WTC11 (cell line): ENCODE measurements at regions of chr1 and their contacts with region 1.

Region 1: GRCh38 chr1:158124999-158125398 is 55.7 kb upstream of the CD1D start:
- DNase-seq: peak; percentile 91
- ATAC-seq: peak; percentile 89
- H3K4me3 Mint-ChIP-seq: no peak overlapping the region
- H3K27ac Mint-ChIP-seq: no peak overlapping the region
- H3K4me1 Mint-ChIP-seq: peaks cover 39% of the 10 kb centered on the region
- H3K27me3 Mint-ChIP-seq: no peaks in the 10 kb centered on the region; the same call in none of the 2 replicates
- CTCF ChIP-seq: peak; percentile 78

Region 2: DNA sequence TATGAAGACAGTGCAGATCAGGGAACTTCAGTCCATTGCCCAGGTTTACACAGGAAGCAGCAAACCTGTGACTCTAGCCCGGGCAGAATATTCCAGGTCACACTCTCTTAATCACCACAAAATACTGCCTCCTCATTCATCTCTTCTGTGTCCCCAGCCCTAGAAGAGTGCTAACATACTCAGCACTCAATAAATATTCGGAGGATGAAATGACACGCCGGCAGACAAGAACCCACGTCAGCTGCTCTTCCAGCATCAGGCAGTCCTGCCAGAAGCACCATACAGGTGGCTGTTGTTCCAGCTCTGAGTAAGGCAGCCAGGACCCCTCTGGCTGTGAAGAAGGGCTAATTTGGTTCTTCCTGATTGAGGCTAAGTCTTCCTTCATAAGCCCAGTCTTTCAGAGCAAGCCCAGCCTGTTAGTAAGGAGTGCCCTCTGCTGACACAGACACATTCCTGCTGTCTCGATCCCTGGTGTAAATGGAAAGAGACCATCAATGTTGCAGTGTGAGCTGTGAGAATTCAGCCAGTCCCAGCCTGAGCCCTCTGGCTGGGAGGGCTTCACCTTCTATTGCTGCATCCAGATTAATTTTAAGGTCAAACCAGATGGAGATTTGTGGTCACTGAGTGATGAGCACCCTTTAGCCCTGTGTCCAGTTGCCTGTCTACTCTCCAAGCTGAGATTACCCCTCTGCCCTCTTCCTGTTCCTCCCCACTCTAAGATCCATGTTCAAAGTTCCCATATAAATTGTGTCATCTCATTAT is 176.5 kb before region 1 on chr1:
- CTCF ChIA-PET with region 1: interaction called, 33 read pairs
- POLR2A ChIA-PET with region 1: no interaction called
- DNase-seq: peak; percentile 59
- ATAC-seq: peak; percentile 99
- H3K4me3 Mint-ChIP-seq: no peak overlapping the region
- H3K27ac Mint-ChIP-seq: no peak overlapping the region
- H3K4me1 Mint-ChIP-seq: peaks cover 2% of the 10 kb centered on the region; the same call in 1 of the 2 replicates
- H3K27me3 Mint-ChIP-seq: peaks cover 2% of the 10 kb centered on the region
- CTCF ChIP-seq: 0 out of 2 replicates have a peak, but pooled peaks have one; percentile 16

Region 3: GRCh38 chr1:157978586-157979403 is 146.2 kb before region 1 on chr1:
- CTCF ChIA-PET with region 1: interaction called, 70 read pairs
- POLR2A ChIA-PET with region 1: interaction called, 4 read pairs
- DNase-seq: peak; percentile 78
- ATAC-seq: peak; percentile 89
- H3K4me3 Mint-ChIP-seq: peak overlapping the region; percentile 49
- H3K27ac Mint-ChIP-seq: peak overlapping the region; percentile 31; the same call in 1 of the 2 replicates
- H3K4me1 Mint-ChIP-seq: peaks cover 60% of the 10 kb centered on the region
- H3K27me3 Mint-ChIP-seq: no peaks in the 10 kb centered on the region; the same call in 1 of the 2 replicates
- CTCF ChIP-seq: no peak

Region 4: DNA sequence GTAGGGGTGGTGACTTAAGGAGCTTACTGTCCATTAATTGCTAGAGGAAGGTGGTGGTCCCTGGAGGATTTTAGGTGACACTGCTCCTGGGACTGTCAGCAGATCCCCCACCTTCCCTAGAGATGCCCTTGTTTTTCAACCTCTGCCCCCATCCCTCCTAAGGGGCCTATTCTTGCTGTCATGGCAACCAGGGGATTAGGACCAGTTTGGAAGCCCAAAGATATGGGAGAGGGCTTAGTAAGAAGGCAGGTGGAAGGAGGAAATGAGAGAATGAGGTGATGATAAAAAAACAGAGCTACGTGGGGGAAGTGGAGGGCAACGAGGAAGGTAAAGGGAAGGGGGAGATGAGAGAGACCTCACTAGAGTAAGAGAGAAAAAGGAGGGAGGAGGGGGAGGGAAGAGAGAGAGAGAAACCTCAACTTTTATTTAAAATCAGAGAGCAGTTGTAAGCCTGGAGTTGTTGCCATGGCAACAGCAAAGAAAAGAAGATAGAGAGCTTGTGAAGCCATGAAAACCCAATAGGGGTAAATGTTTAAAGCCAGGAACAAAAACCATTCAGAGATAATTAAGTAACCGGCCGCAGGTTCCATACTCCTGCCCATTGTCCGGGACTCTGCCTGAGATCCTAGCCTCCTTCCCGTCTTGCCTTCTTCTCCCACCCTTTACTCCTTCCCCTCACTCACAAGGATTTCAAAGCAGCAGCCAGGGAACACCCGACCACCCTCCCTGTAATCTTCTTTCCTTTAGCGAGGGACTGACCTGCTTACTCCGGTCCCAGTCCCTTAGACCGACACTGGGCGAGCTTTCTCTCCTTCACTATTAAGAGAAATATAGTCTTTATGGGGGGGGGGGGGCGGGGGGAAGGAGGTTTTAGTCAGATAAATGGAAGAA is 110.9 kb before region 1 on chr1:
- CTCF ChIA-PET with region 1: interaction called, 15 read pairs
- POLR2A ChIA-PET with region 1: no interaction called
- DNase-seq: no peak
- ATAC-seq: peak; percentile 4
- H3K4me3 Mint-ChIP-seq: peak overlapping the region; percentile 44
- H3K27ac Mint-ChIP-seq: peak overlapping the region; percentile 96
- H3K4me1 Mint-ChIP-seq: peaks cover 95% of the 10 kb centered on the region
- H3K27me3 Mint-ChIP-seq: no peaks in the 10 kb centered on the region
- CTCF ChIP-seq: no peak

Region 5: DNA sequence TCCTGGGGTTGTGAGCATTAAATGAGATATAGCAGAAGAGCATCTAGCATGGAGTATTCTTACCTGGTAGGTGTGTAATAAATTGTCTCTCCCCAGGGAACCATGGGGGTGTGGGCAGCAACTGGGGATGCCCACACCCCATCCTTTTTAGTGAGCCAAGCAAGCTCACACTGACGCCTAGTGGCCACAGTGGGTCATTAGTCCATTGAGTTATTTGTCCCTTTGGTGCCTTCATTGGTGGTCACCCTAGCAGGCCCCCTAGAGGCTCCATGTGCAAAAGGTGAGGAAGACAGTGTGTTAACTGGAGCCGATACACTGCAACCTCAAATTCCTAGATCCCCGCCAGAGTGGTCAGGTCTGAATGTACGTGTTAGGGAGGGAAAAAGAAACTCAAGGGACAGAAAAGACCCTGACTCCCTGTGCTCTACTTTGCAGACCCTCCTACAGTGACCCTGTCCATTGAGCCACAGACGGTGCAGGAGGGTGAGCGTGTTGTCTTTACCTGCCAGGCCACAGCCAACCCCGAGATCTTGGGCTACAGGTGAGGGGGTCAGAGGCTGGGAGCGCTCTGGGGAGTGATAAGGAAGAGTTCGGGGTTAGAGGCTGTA is 37.6 kb before region 1 on chr1:
- CTCF ChIA-PET with region 1: interaction called, 443 read pairs
- POLR2A ChIA-PET with region 1: no interaction called
- DNase-seq: peak; percentile 87
- ATAC-seq: peak; percentile 97
- H3K4me3 Mint-ChIP-seq: no peak overlapping the region
- H3K27ac Mint-ChIP-seq: peak overlapping the region; percentile 69
- H3K4me1 Mint-ChIP-seq: peaks cover 8% of the 10 kb centered on the region
- H3K27me3 Mint-ChIP-seq: no peaks in the 10 kb centered on the region
- CTCF ChIP-seq: peak; percentile 94

Region 6: DNA sequence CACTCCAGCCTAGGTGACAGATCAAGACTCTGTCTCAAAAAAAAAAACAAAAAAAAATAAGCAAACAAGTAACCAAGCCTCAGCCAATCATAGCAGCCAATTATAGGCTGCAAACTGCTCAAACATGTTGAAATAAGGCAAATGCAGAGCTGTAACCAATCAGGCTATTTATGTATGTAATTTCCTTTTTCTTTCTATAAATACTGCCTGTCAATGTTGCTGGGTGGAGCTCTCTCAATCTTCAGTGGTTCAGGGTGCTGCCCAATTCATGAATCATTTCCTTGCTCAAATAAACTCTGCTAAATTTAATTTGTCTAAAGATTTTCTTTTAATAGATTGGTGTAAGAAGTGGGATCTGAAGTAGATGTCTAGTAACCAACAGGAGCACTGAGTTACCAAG is 44.1 kb after region 1 on chr1:
- CTCF ChIA-PET with region 1: no interaction called
- POLR2A ChIA-PET with region 1: no interaction called
- DNase-seq: no peak
- ATAC-seq: no peak
- H3K4me3 Mint-ChIP-seq: no peak overlapping the region
- H3K27ac Mint-ChIP-seq: no peak overlapping the region
- H3K4me1 Mint-ChIP-seq: no peaks in the 10 kb centered on the region
- H3K27me3 Mint-ChIP-seq: peaks cover 13% of the 10 kb centered on the region; the same call in 1 of the 2 replicates
- CTCF ChIP-seq: no peak

Region 7: GRCh38 chr1:158180741-158181576 is 56.0 kb after region 1 on chr1 and contains the start of gene CD1D:
- CTCF ChIA-PET with region 1: interaction called, 14 read pairs
- POLR2A ChIA-PET with region 1: interaction called, 3 read pairs
- DNase-seq: peak; percentile 64
- ATAC-seq: peak; percentile 55
- H3K4me3 Mint-ChIP-seq: peak within 1 kb of the TSS; percentile 92
- H3K27ac Mint-ChIP-seq: no peak within 1 kb of the TSS
- H3K4me1 Mint-ChIP-seq: peaks cover 45% of the 10 kb centered on the region
- H3K27me3 Mint-ChIP-seq: peaks cover 90% of the 10 kb centered on the region
- CTCF ChIP-seq: no peak
- total RNA-seq, gene CD1D: 3.8 to 4.7 TPM (median 3.9 TPM) in 3 replicates

Region 8: DNA sequence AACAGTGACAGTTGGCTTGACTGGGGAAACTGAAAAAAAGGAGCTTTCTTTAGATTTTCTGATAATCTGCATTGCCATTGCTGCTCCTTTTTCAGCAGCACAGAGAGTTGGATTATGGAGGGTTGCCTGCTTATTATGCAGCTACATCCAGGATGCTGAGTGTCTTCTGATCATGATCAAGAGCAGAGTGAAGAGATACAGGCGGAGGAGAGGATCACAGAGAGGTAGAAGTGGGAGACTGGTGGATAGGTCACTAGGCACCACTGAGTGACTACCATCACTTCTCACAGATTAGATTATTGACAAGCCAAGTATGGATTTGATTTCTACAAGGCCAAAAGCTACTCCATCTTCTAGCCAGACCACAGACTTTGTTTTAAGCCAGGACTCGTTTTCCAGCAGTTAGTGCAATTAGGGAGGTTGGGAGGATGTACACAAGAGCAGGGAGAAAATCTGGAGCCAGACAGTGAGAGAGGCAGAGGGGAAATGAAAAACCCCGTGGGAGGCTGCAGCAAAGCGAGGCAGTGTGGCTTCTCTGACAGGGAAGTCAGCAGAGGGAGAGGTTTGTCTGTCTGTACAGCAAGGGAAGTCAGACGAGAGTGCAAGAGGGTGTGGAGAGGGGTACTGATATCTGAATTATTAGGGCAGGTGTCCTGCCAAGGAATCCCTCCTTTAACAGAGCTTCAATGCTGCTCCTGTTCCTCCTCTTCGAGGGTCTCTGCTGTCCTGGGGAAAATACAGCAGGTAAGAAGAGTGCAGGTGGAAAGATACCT is 228.5 kb after region 1 on chr1 and contains the start of gene CD1E:
- CTCF ChIA-PET with region 1: no interaction called
- POLR2A ChIA-PET with region 1: no interaction called
- DNase-seq: no peak
- ATAC-seq: no peak
- H3K4me3 Mint-ChIP-seq: no peak within 1 kb of the TSS
- H3K27ac Mint-ChIP-seq: no peak within 1 kb of the TSS
- H3K4me1 Mint-ChIP-seq: peaks cover 13% of the 10 kb centered on the region
- H3K27me3 Mint-ChIP-seq: no peaks in the 10 kb centered on the region
- CTCF ChIP-seq: no peak
- total RNA-seq, gene CD1E: not detected in 3 replicates